ENCODE measurements at regions of chr14 and their contacts with region 1.

Region 1: DNA sequence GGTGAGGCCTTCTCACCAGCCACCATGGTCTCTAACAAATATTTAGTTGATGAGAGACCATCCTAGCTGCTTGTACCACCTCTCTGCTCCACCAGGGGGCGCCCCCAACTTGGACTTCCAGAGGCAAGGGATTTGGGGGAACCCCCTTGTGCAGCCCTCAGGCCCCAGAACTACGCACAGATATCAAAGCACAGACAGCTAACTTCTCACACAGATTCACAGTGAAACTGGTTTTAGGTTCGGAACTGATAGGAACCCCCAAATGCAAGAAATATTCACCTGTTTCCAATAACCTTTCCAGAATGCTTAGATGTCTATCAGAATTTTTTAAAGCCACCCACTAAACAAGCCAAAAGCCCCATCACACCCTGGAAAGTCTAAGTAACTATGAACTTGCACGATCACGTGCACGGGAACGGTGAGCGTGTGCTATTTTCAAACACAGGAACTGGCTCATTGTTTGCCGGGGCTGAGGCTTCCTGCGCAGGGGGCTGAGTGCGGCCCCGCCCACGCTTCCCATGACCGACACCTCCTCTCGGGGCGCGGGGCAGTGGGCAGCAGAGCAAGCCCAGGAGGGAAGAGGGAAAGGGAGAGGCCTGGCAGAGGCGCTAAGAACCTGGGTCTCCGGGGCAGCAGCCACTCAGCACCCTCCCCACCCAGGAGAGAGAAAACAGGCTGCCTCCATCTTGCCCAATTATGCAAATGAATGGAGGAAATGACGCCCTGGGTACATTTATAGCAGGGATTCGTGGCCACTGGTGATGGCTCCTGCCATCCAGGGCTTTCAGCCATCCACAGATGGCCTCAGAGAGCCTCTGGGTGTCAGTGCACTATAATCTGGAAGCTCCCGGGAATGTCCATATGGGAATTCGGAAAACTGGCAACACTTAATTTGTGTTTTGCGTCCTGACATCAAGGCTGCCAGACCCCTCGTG is 79.4 kb upstream of the GPR68 start:
- DNase-seq: peak; percentile 55 to 67
- ATAC-seq: peak; percentile 74 to 88; a peak in 5 of 6 replicates
- H3K4me3 ChIP-seq: no peak overlapping the region
- H3K27ac ChIP-seq: no peak overlapping the region
- H3K4me1 ChIP-seq: no peaks in the 10 kb centered on the region
- CTCF ChIP-seq: peak; percentile 93
- EP300 ChIP-seq: no peak
- POLR2A ChIP-seq: no peak
- RAD21 ChIP-seq: peak; percentile 84

Region 2: GRCh38 chr14:91313154-91313850 is 10.6 kb before region 1 on chr14:
- CTCF ChIA-PET with region 1: interaction called, 23 read pairs
- POLR2A ChIA-PET with region 1: no interaction called
- DNase-seq: no peak
- ATAC-seq: no peak
- H3K4me3 ChIP-seq: no peak overlapping the region
- H3K27ac ChIP-seq: no peak overlapping the region
- H3K4me1 ChIP-seq: no peaks in the 10 kb centered on the region
- CTCF ChIP-seq: no peak
- EP300 ChIP-seq: no peak
- POLR2A ChIP-seq: no peak
- RAD21 ChIP-seq: no peak

Region 3: DNA sequence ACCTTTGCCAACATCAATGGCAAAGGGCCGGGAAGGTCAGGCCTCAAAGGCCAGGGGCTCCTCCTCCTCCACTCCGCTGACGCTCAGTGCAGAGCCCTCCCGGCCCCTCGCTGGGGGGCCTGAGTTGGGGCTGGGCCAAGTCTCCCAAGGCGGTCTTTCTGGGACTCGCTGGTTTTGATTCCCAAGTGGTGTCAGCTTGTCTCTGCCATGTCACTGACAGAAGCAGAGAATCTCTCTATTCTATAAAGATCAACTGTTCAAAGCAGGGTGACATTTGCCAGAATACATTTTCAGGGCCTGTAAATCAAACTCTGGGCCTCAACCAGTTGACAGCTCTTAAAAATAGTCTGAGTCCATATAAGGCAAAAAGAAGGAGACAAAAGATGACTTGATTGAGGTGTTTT is 17.8 kb after region 1 on chr14:
- CTCF ChIA-PET with region 1: interaction called, 124 read pairs
- POLR2A ChIA-PET with region 1: no interaction called
- DNase-seq: no peak
- ATAC-seq: no peak
- H3K4me3 ChIP-seq: no peak overlapping the region
- H3K27ac ChIP-seq: no peak overlapping the region
- H3K4me1 ChIP-seq: no peaks in the 10 kb centered on the region
- CTCF ChIP-seq: no peak
- EP300 ChIP-seq: no peak
- POLR2A ChIP-seq: no peak
- RAD21 ChIP-seq: no peak

Region 4: DNA sequence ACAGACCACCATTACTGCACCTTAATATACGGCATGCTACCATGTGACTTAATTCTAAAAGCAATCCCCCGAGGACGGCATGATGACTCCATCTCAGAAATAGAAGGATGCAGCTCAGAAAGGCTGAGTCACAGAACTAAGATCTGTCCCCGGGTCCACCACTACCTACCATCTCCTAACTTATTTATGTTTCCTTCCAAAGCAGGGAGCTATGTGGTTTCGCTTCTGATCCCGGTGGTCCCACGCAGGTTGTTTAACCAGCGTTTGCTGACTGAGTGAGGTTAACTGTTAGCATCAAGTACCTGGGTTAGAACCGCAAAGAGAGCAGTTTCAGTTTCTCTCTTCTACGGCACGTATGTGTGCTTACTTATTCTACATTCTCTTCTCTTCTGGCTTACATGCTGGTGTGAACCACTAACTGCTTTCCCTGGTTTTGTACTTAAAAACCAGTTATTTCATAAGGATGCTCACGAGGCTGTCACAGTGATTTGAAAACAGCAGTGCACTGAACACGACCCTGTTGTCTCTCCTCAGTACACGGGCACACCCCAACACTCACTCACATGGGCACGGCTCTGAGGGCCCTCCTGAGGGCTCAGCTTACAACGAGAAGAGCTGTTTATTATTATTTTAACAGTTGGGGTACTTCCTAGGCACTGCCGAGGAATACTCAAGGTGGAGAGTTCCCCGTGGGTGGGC is 27.0 kb after region 1 on chr14:
- CTCF ChIA-PET with region 1: interaction called, 124 read pairs
- POLR2A ChIA-PET with region 1: no interaction called
- DNase-seq: no peak
- ATAC-seq: no peak
- H3K4me3 ChIP-seq: no peak overlapping the region
- H3K27ac ChIP-seq: no peak overlapping the region
- H3K4me1 ChIP-seq: no peaks in the 10 kb centered on the region
- CTCF ChIP-seq: no peak
- EP300 ChIP-seq: no peak
- POLR2A ChIP-seq: no peak
- RAD21 ChIP-seq: no peak

Region 5: GRCh38 chr14:91396959-91397815 is 73.2 kb after region 1 on chr14:
- CTCF ChIA-PET with region 1: interaction called, 10 read pairs
- POLR2A ChIA-PET with region 1: no interaction called
- DNase-seq: no peak
- ATAC-seq: no peak; a peak in 1 of 6 replicates
- H3K4me3 ChIP-seq: no peak overlapping the region
- H3K27ac ChIP-seq: no peak overlapping the region
- H3K4me1 ChIP-seq: no peaks in the 10 kb centered on the region
- CTCF ChIP-seq: no peak
- EP300 ChIP-seq: no peak
- POLR2A ChIP-seq: no peak
- RAD21 ChIP-seq: no peak

Region 6: GRCh38 chr14:91418387-91419043 is 94.6 kb after region 1 on chr14:
- CTCF ChIA-PET with region 1: interaction called, 64 read pairs
- POLR2A ChIA-PET with region 1: interaction called, 5 read pairs
- DNase-seq: peak; percentile 52 to 68
- ATAC-seq: peak; percentile 55 to 83
- H3K4me3 ChIP-seq: peak overlapping the region; percentile 58
- H3K27ac ChIP-seq: peak overlapping the region; percentile 87 to 94
- H3K4me1 ChIP-seq: peaks cover 12% of the 10 kb centered on the region
- CTCF ChIP-seq: peak; percentile 84
- EP300 ChIP-seq: no peak
- POLR2A ChIP-seq: no peak
- RAD21 ChIP-seq: peak; percentile 74 to 77